ENCODE measurements at regions of chr20 and their contacts with region 1.

Region 1: GRCh38 chr20:51639206-51639832 is 96.8 kb upstream of the NFATC2 start:
- DNase-seq: peak; percentile 73
- ATAC-seq: peak; percentile 82 to 84

Region 2: GRCh38 chr20:51784299-51784698 is 145.0 kb after region 1 on chr20:
- intact Hi-C with region 1: no loop called
- DNase-seq: no peak
- ATAC-seq: no peak

Region 3: GRCh38 chr20:51966291-51966971 is 327.1 kb after region 1 on chr20:
- intact Hi-C with region 1: loop called in 1 of 2 experiments (anchors 5 kb)
- DNase-seq: peak; percentile 34
- ATAC-seq: peak in 1 of 2 donors; percentile 72

Region 4: GRCh38 chr20:52083627-52084232 is 444.4 kb after region 1 on chr20:
- intact Hi-C with region 1: loop called (anchors 2 to 10 kb)
- DNase-seq: peak; percentile 41
- ATAC-seq: peak; percentile 56 to 68

Measured in left cardiac atrium (tissue), 4 donors.